HCT116 (cell line): ENCODE measurements at regions of chr9 and their contacts with region 1.

Region 1: DNA sequence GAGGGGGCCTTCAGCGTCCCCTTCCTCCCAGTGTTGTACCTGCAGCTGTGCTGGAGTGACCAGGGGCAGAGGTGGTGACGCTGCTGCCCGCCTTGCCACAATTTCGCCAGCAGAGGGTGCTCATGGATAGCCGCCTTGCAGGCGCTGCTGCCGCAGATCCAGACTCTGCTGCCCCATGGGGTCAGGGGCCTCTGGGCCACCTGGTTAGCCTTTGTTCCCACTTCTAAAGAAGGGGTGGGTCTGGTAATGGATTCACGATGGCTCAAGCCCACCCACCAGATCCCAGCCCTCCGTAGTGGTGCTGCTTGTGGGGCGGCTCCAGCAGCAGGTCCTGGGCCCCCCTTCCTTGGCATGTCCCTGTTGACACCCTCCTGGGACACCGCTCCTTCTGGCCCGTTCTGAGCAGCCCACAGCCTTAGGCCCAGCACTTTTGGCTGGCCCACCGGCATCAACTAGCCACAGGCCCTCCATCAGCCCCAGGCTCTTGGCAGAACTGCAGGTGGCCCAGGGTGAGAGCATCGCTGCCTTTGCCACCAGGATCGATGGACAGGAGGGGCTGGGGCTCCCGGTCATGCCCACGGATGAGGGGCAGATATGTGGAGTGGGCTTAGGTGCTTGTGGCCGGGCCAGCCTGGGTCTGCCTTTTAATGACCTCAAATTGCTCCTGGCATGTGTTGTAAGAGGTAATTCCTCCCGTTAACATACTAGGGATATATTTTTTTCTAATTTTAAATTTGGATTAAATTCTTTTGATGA is 57.2 kb downstream of the COL5A1 start:
- DNase-seq: peak; percentile 39
- ATAC-seq: peak; percentile 94
- H3K4me3 ChIP-seq: no peak overlapping the region
- H3K27ac ChIP-seq: no peak overlapping the region
- H3K4me1 ChIP-seq: peaks cover 0 to 2% of the 10 kb centered on the region in 2 experiments; a peak in 1 of 4 replicates
- H3K27me3 ChIP-seq: no peaks in the 10 kb centered on the region
- CTCF ChIP-seq: peak; percentile 89 to 94 (median 91)
- POLR2A ChIP-seq: no peak
- RAD21 ChIP-seq: peak; percentile 91

Region 2: DNA sequence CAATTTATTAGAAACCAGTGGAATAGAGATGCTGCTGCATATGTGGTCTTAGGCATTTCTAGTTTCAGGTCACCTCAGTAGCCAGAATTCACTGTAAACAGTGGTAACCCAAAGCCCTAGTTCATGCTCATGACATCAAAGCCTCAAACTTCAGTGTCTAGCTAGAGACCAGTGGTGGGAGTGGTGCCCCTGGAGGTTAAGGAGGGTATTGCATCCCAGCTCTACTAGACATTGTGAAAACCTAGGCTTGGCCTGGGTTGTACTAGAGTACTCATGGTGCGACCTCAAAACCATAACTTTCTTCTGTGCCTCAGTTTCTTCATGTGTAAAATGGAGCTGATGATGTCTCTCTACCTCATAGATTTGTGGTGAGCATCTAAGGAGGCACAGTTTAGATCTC is 38.4 kb before region 1 on chr9:
- CTCF ChIA-PET with region 1: no interaction called
- POLR2A ChIA-PET with region 1: no interaction called
- RAD21 ChIA-PET with region 1: no interaction called
- intact Hi-C with region 1: no loop called
- DNase-seq: peak; percentile 22
- ATAC-seq: 0 out of 2 replicates have a peak, but pooled peaks have one; percentile 37
- H3K4me3 ChIP-seq: no peak overlapping the region
- H3K27ac ChIP-seq: no peak overlapping the region
- H3K4me1 ChIP-seq: no peaks in the 10 kb centered on the region
- H3K27me3 ChIP-seq: no peaks in the 10 kb centered on the region
- CTCF ChIP-seq: peak in 2 of 3 experiments; percentile 81 to 91; a peak in 4 of 6 replicates
- POLR2A ChIP-seq: no peak
- RAD21 ChIP-seq: no peak

Region 3: DNA sequence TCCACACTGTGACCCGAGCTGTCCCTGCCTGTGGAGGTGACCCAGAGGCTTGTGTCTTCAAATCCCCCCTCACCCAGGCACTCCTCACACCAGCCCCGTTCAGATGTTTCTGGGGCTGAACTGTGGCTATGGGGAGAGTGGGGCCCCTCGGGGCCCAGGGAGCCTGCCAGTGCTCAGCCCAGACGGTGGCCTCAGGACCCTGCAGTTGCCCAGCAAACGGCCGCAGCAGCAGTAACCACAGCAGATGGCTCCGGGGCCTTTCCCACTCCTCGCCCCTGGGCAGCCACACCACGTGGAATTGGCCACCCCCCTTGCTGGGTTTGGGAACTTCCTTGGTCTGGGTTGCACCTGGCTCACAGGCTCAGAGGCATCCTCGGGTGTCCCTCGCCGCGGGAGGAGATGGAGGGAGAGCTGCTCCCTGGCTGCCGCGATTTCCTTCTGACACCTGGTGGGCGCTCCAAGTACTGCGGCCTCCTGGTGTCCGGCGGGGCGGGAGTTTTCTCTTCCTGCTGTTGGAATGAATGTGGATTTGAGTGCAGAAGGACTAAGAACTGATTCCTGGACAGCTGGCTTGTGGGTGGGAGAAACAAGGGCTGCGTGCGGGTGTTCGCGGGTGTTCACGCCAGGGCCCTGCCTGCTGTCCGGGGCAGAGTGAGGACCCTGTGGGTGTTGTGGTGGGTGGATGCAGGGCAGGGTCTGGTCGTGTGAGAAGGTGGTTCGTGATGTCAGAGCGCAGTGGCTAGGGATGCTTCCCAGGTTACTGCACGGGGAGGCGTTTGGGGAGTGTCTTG is 40.3 kb after region 1 on chr9:
- CTCF ChIA-PET with region 1: interaction called, 30 read pairs
- POLR2A ChIA-PET with region 1: interaction called, 3 read pairs
- RAD21 ChIA-PET with region 1: interaction called in 1 of 2 experiments, 7 read pairs
- intact Hi-C with region 1: loop called (anchors 1 kb)
- DNase-seq: peak; percentile 12
- ATAC-seq: peak; percentile 87
- H3K4me3 ChIP-seq: no peak overlapping the region
- H3K27ac ChIP-seq: no peak overlapping the region
- H3K4me1 ChIP-seq: peaks cover 0 to 4% of the 10 kb centered on the region in 2 experiments; a peak in 1 of 4 replicates
- H3K27me3 ChIP-seq: no peaks in the 10 kb centered on the region
- CTCF ChIP-seq: peak; percentile 81 to 87 (median 86)
- POLR2A ChIP-seq: no peak
- RAD21 ChIP-seq: peak; percentile 91

Region 4: GRCh38 chr9:134983074-134983473 is 284.3 kb after region 1 on chr9:
- CTCF ChIA-PET with region 1: no interaction called
- POLR2A ChIA-PET with region 1: no interaction called
- RAD21 ChIA-PET with region 1: no interaction called
- intact Hi-C with region 1: loop called (anchors 10 kb)
- DNase-seq: no peak
- ATAC-seq: peak; percentile 49; the same call in 1 of the 2 replicates
- H3K4me3 ChIP-seq: no peak overlapping the region
- H3K27ac ChIP-seq: no peak overlapping the region
- H3K4me1 ChIP-seq: no peaks in the 10 kb centered on the region
- H3K27me3 ChIP-seq: peaks cover 5% of the 10 kb centered on the region; the same call in 1 of the 2 replicates
- CTCF ChIP-seq: peak; percentile 27 to 43 (median 37); a peak in 3 of 6 replicates
- POLR2A ChIP-seq: no peak
- RAD21 ChIP-seq: peak; percentile 59